ENCODE measurements at regions of chrX and their contacts with region 1.

Region 1: DNA sequence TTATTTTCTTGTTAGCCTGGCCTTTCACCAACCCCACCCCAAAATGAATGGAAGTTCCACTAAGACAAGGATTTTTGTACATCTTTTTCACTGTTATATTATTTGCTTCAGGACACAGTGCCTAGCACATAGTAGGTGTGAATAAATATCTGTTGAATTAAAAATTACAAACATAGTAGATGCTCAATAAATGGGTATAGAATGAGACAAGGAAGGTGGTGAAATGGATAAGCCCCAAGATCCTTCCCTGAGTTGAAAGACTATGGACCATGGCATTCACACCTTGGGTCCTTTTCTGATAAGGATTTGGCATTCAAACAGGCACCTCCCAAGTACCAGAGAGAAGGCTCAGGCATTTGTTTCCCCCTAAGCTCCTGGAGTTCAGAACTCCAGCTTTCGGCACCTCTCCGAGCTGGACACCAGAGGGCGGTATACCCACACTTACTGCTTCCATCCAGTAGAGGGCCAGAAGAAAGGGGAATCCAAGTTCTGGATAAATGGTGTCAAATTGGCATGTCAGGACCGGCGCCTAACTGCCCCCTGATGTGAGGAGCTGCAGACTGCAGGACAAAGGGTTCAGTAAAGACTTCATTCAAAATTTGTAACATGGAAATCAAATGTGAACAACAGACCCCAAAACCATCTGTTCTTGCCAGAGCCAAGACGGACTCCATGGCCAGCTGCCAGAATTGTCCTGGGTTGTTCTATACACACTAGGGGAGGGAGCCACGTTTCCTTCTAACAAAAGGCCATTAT is 193.0 kb downstream of the GPC3 start:
- H3K4me3 ChIP-seq: no peak overlapping the region
- H3K27ac ChIP-seq: no peak overlapping the region
- H3K4me1 ChIP-seq: no peaks in the 10 kb centered on the region; the same call in 1 of the 2 replicates
- CTCF ChIP-seq: peak; percentile 99

Region 2: GRCh38 chrX:133495464-133496391 is 296.6 kb before region 1 on chrX:
- CTCF ChIA-PET with region 1: no interaction called
- POLR2A ChIA-PET with region 1: no interaction called
- H3K4me3 ChIP-seq: no peak overlapping the region
- H3K27ac ChIP-seq: no peak overlapping the region
- H3K4me1 ChIP-seq: no peaks in the 10 kb centered on the region
- CTCF ChIP-seq: no peak

Region 3: GRCh38 chrX:133776072-133776471 is 16.3 kb before region 1 on chrX:
- CTCF ChIA-PET with region 1: interaction called, 13 read pairs
- POLR2A ChIA-PET with region 1: no interaction called
- H3K4me3 ChIP-seq: no peak overlapping the region
- H3K27ac ChIP-seq: no peak overlapping the region
- H3K4me1 ChIP-seq: 0 out of 2 replicates have a peak, but pooled peaks cover 3% of the 10 kb centered on the region
- CTCF ChIP-seq: no peak

Region 4: GRCh38 chrX:133838761-133839676 is 46.6 kb after region 1 on chrX:
- CTCF ChIA-PET with region 1: interaction called, 20 read pairs
- POLR2A ChIA-PET with region 1: no interaction called
- H3K4me3 ChIP-seq: no peak overlapping the region
- H3K27ac ChIP-seq: no peak overlapping the region
- H3K4me1 ChIP-seq: no peaks in the 10 kb centered on the region
- CTCF ChIP-seq: no peak

Region 5: GRCh38 chrX:134020910-134021309 is 228.5 kb after region 1 on chrX:
- CTCF ChIA-PET with region 1: interaction called, 78 read pairs
- POLR2A ChIA-PET with region 1: no interaction called
- H3K4me3 ChIP-seq: no peak overlapping the region
- H3K27ac ChIP-seq: no peak overlapping the region
- H3K4me1 ChIP-seq: no peaks in the 10 kb centered on the region
- CTCF ChIP-seq: peak; percentile 17; the same call in 1 of the 2 replicates

Region 6: GRCh38 chrX:134396174-134396573 is 603.8 kb after region 1 on chrX:
- CTCF ChIA-PET with region 1: interaction called, 34 read pairs
- POLR2A ChIA-PET with region 1: no interaction called
- H3K4me3 ChIP-seq: no peak overlapping the region
- H3K27ac ChIP-seq: no peak overlapping the region
- H3K4me1 ChIP-seq: no peaks in the 10 kb centered on the region
- CTCF ChIP-seq: peak; percentile 34; the same call in 1 of the 2 replicates